Activated B cell treated with CpG ODN at 0.5 μM for 24 hours (primary cell): ENCODE measurements at regions of chr5 and their contacts with region 1.

Region 1: GRCh38 chr5:177140312-177140711 is 6.7 kb downstream of the NSD1 start:
- DNase-seq: no peak
- ATAC-seq: no peak
- H3K4me3 Mint-ChIP-seq: no peak overlapping the region
- H3K27ac Mint-ChIP-seq: no peak overlapping the region
- H3K4me1 Mint-ChIP-seq: peaks cover 54% of the 10 kb centered on the region
- H3K27me3 Mint-ChIP-seq: no peaks in the 10 kb centered on the region
- CTCF ChIP-seq: no peak

Region 2: DNA sequence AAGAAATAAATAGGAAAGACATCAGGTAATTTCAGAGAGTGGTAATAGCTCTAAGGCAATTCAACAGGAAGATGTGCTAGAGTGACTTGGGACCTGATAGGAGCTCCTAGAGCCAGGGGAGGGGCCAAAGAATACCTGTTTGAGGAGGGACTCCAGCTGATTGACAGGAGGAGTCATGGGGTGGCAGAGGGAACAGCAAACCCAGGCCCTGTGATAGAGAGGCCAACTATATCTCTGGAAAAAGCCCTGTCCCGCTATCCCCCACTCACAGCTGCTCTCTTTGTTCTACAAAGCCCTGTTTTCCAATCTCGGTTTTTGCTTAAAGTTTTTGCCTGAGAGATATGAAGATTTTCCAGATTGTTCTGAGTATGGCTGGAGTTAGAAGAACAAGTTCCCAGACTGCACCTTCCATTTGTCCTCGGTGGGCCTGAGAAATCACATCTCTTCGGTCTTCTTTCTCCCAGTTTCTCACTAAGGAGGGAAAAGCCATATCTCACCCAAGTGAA is 15.8 kb before region 1 on chr5:
- CTCF ChIA-PET with region 1: no interaction called
- POLR2A ChIA-PET with region 1: interaction called, 10 read pairs
- intact Hi-C with region 1: no loop called
- DNase-seq: no peak
- ATAC-seq: peak; percentile 90
- H3K4me3 Mint-ChIP-seq: peak overlapping the region; percentile 59
- H3K27ac Mint-ChIP-seq: peak overlapping the region; percentile 82
- H3K4me1 Mint-ChIP-seq: peaks cover 30% of the 10 kb centered on the region
- H3K27me3 Mint-ChIP-seq: no peaks in the 10 kb centered on the region
- CTCF ChIP-seq: no peak

Region 3: GRCh38 chr5:177198738-177199137 is 58.4 kb after region 1 on chr5:
- CTCF ChIA-PET with region 1: no interaction called
- POLR2A ChIA-PET with region 1: no interaction called
- intact Hi-C with region 1: no loop called
- DNase-seq: no peak
- ATAC-seq: peak; percentile 42
- H3K4me3 Mint-ChIP-seq: no peak overlapping the region
- H3K27ac Mint-ChIP-seq: no peak overlapping the region
- H3K4me1 Mint-ChIP-seq: peaks cover 15% of the 10 kb centered on the region
- H3K27me3 Mint-ChIP-seq: no peaks in the 10 kb centered on the region
- CTCF ChIP-seq: no peak